ENCODE measurements at regions of chr11 and their contacts with region 1.

Region 1: GRCh38 chr11:9396752-9397151 is 12.3 kb downstream of the IPO7 start:
- DNase-seq: no peak
- ATAC-seq: no peak
- H3K4me3 ChIP-seq: no peak overlapping the region
- H3K27ac ChIP-seq: no peak overlapping the region
- H3K4me1 ChIP-seq: peaks cover 0 to 22% of the 10 kb centered on the region in 2 experiments; a peak in 1 of 4 replicates
- H3K27me3 ChIP-seq: no peaks in the 10 kb centered on the region
- CTCF ChIP-seq: no peak
- POLR2A ChIP-seq: no peak
- RAD21 ChIP-seq: no peak

Region 2: DNA sequence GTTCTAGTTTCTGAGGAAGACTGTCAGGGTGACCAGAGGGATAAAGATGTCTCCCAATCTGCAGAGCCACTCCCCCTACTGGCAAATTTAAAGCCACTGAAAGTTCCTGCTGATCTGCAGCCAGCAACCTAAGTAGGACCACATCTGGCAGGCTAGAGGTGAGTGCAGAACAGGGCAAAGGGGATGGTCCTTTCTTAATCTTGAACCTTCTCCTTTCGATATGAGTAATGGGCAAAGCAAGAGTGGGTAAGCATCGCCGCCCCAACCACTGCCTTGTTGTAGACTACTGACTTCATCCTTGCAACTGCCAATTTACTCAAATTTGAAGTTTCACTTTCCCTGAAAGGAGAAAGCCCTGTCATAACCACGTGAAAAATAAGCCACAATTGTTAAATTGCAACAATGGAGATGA is 336.0 kb before region 1 on chr11:
- CTCF ChIA-PET with region 1: no interaction called
- POLR2A ChIA-PET with region 1: no interaction called
- RAD21 ChIA-PET with region 1: no interaction called
- intact Hi-C with region 1: no loop called
- DNase-seq: no peak
- ATAC-seq: peak; percentile 75
- H3K4me3 ChIP-seq: no peak overlapping the region
- H3K27ac ChIP-seq: no peak overlapping the region
- H3K4me1 ChIP-seq: no peaks in the 10 kb centered on the region
- H3K27me3 ChIP-seq: no peaks in the 10 kb centered on the region
- CTCF ChIP-seq: peak in 2 of 3 experiments; percentile 52 to 56; a peak in 4 of 6 replicates
- POLR2A ChIP-seq: no peak
- RAD21 ChIP-seq: peak; percentile 44; the same call in 1 of the 2 replicates

Region 3: DNA sequence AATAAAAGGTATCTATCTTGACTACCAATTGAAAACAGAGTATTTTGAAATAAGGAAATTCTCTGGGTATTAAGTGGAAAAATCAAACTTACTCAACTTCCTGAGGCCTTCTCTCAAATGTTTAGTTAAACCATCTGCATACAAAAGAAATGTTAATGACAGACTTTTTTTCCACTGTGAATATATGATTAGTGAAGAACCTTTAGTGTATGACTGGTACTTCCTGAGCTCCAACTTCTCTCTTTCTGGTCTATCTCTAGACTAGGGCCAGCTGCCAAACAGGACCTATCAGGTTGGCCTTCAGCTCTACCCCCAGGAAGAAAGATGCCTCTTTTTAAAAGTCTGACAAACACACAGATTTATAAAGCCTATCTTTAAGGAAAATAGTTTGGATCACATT is 236.6 kb before region 1 on chr11:
- CTCF ChIA-PET with region 1: no interaction called
- POLR2A ChIA-PET with region 1: no interaction called
- RAD21 ChIA-PET with region 1: no interaction called
- intact Hi-C with region 1: loop called (anchors 10 kb)
- DNase-seq: no peak
- ATAC-seq: no peak
- H3K4me3 ChIP-seq: no peak overlapping the region
- H3K27ac ChIP-seq: no peak overlapping the region
- H3K4me1 ChIP-seq: peaks cover 0 to 4% of the 10 kb centered on the region in 2 experiments; a peak in 1 of 4 replicates
- H3K27me3 ChIP-seq: no peaks in the 10 kb centered on the region
- CTCF ChIP-seq: no peak
- POLR2A ChIP-seq: no peak
- RAD21 ChIP-seq: no peak

Region 4: GRCh38 chr11:9438611-9439010 is 41.9 kb after region 1 on chr11:
- CTCF ChIA-PET with region 1: no interaction called
- POLR2A ChIA-PET with region 1: no interaction called
- RAD21 ChIA-PET with region 1: no interaction called
- intact Hi-C with region 1: no loop called
- DNase-seq: no peak
- ATAC-seq: no peak
- H3K4me3 ChIP-seq: no peak overlapping the region
- H3K27ac ChIP-seq: no peak overlapping the region
- H3K4me1 ChIP-seq: no peaks in the 10 kb centered on the region
- H3K27me3 ChIP-seq: no peaks in the 10 kb centered on the region
- CTCF ChIP-seq: no peak
- POLR2A ChIP-seq: no peak
- RAD21 ChIP-seq: no peak

Measured in HCT116 (cell line).